ENCODE measurements at regions of chr2 and their contacts with region 1.

Region 1: GRCh38 chr2:217713395-217714286 is 289.2 kb downstream of the TNS1 start:
- DNase-seq: peak; percentile 80 to 82
- ATAC-seq: peak; percentile 76 to 88 (median 84)
- H3K4me3 ChIP-seq: no peak overlapping the region
- H3K27ac ChIP-seq: peak overlapping the region in 9 of 10 donors; percentile 12 to 82 (median 56)
- H3K4me1 ChIP-seq: peaks cover 0 to 26% (median 20%) of the 10 kb centered on the region in 9 donors
- H3K27me3 ChIP-seq: no peaks in the 10 kb centered on the region
- CTCF ChIP-seq: peak; percentile 86 to 99 (median 98)

Region 2: GRCh38 chr2:216519154-216519762 is 1194.4 kb before region 1 on chr2:
- intact Hi-C with region 1: loop called in 3 of 10 experiments (anchors 5 kb)
- DNase-seq: peak in 1 of 2 donors; percentile 86
- ATAC-seq: peak; percentile 63 to 89 (median 87)
- H3K4me3 ChIP-seq: no peak overlapping the region
- H3K27ac ChIP-seq: no peak overlapping the region
- H3K4me1 ChIP-seq: peaks cover 0 to 10% (median 5%) of the 10 kb centered on the region in 9 donors
- H3K27me3 ChIP-seq: no peaks in the 10 kb centered on the region
- CTCF ChIP-seq: peak; percentile 69 to 91 (median 81)

Region 3: DNA sequence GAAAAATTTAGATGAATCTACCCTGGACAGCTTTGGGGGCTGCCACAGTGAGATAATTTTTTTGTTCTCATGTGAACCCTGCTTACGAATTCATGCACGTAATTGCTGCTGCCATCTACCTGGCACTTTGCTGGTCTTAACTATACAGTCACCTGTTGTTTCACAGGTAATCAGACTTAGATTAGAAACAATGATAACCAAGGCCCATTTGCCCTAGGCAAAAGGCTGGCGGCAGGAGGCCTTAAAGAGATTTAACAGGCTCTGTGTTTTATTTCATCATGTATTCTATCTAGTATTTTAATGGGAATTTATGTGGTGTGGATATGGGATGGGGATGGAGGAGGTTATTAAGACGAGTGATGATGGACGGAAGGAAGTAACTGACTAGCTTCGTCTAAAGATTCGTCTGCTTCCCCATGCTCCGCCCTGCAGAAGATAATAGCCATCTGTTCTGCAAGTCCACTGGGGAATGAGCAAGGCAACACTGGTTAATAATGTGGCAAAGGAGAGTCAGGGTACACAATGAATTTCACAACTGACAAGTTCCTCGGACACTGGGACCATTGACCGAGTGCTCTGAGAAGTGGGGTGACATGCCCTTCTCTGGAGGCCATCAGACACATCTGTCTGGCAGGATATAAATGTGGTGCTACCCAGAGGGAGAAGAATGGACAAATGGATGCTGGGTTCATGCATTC is 562.0 kb before region 1 on chr2:
- intact Hi-C with region 1: loop called in 1 of 10 experiments (anchors 10 kb)
- DNase-seq: no peak
- ATAC-seq: peak in 6 of 8 donors; percentile 20 to 83 (median 67)
- H3K4me3 ChIP-seq: no peak overlapping the region
- H3K27ac ChIP-seq: peak overlapping the region in 2 of 10 donors; percentile 21 to 34
- H3K4me1 ChIP-seq: no peaks in the 10 kb centered on the region
- H3K27me3 ChIP-seq: peaks cover 0 to 82% (median 0%) of the 10 kb centered on the region in 7 donors
- CTCF ChIP-seq: no peak

Region 4: DNA sequence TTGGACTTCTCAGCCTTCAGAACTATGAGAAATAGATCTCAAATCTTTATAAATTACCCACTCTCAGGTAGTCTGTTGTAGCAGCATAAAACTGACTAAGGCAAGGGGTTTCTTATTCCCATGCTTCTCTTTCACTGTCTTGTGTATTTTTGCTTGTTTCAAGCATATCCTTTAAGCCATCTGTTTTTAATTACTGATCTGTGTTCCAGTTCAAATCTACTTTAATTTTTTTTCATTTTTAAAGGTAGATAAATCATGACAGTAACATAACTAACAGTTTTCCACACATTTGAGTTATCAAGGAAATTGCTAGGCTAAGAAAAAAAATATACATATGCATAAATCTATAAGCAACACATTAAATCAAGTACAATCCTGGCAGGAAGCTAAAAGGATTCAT is 535.9 kb before region 1 on chr2:
- intact Hi-C with region 1: loop called in 2 of 10 experiments (anchors 5 to 10 kb)
- DNase-seq: no peak
- ATAC-seq: no peak
- H3K4me3 ChIP-seq: no peak overlapping the region
- H3K27ac ChIP-seq: no peak overlapping the region
- H3K4me1 ChIP-seq: peaks cover 0 to 2% (median 0%) of the 10 kb centered on the region in 9 donors
- H3K27me3 ChIP-seq: peaks cover 0 to 40% (median 0%) of the 10 kb centered on the region in 7 donors
- CTCF ChIP-seq: no peak

Region 5: DNA sequence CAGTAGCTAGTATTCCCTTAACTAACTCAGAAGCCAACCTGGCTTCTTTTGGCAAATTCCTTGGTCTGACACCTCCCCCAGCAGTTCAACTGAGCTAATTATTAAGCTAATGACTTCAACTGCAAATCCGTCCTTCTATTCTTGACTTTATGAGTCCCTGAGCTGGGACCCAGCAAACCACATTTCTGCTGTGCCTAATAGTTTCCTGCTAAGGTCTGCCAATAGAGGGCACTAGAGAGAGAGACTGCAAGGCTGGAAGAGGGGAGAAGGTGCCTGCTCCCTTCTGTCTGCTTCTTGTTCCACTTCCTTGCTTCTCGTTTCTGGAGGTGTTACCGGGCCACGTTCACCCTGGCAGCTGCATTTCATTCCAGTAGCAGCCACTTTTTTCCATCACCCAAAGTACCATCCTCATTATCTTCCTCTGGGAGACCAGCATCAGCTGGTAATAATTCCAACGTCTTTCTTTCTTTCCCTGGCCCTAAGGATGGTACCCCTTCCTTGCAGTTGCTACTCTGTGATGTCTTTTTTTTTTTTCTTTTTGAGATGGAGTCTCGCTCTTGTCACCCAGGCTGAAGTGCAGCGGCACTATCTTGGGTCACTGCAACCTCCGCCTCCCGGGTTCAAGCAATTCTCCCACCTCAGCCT is 62.8 kb before region 1 on chr2:
- intact Hi-C with region 1: loop called in 5 of 10 experiments (anchors 2 to 5 kb)
- DNase-seq: peak in 1 of 2 donors; percentile 65
- ATAC-seq: peak in 7 of 8 donors; percentile 57 to 86 (median 79)
- H3K4me3 ChIP-seq: no peak overlapping the region
- H3K27ac ChIP-seq: no peak overlapping the region
- H3K4me1 ChIP-seq: peaks cover 0 to 17% (median 3%) of the 10 kb centered on the region in 9 donors
- H3K27me3 ChIP-seq: no peaks in the 10 kb centered on the region
- CTCF ChIP-seq: peak; percentile 52 to 84 (median 78)

Measured in heart right ventricle (tissue), 16 donors.